ENCODE measurements at regions of chr11 and their contacts with region 1.

Region 1: DNA sequence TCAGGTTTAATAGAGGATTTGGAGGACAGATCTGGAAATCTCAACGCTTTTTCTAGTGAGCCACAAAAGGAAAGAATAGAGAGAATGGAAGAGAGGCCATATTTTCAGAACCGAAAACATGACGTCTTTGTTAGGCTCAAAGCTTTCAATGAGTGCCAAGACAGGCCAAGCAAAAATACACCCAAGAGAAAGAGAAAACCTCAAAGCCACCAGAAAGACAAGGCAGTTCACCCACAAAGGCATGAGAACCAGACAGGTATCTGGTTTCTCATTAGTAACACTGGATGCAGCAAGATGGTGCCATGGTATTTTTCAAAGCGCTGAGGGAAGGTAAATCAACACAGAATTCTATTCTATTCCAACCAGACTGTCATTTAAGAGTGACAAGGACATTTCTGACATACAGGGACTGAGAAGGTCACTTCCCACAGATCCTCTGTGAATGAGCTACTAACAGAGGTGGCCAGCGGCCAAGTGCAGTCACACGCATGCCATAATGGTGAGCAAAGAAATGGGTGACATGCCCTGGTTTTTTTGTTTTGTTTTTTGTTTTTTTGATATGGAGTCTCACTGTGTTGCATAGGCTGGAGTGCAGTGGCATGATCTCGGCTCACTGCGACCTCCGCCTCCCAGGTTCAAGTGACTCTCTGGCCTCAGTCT is 41.9 kb downstream of the TOLLIP start:
- DNase-seq: no peak
- ATAC-seq: no peak
- H3K4me3 ChIP-seq: no peak overlapping the region
- H3K27ac ChIP-seq: no peak overlapping the region
- H3K4me1 ChIP-seq: peaks cover 0 to 7% of the 10 kb centered on the region in 2 donors
- H3K27me3 ChIP-seq: no peaks in the 10 kb centered on the region
- CTCF ChIP-seq: no peak
- POLR2A ChIP-seq: no peak

Region 2: DNA sequence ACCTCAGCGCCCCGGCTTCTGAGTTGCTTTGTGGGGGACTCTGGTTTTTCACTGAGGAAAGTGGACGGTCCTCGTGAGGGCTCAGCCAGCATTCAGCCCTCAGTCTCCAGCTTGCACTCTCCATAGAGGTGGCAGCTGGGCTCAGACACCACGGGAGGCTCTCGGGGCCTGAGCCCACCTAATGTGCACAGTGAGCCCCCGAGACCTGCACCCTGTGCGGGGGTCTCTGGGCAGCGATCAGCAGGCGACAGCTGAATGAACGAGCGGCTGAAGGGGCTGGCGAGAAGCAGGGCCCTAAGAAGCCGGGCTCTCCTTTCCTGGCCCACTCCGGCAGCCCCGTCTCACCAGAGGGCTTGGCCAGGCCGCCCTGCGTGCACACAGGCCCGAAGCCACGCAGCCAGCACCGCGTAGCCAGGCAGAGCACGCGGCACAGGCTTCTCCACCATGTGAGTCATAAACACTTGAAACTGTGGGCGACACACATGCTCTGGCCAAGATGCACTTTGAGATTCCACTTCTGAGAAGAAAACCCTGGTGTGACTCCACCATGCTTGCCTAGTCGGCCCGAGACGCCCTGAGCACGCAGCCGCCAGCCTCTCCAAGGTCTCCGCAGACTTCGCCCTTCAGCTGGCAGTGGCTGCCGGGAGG is 13.9 kb after region 1 on chr11:
- in situ Hi-C with region 1: no loop called
- intact Hi-C with region 1: no loop called
- DNase-seq: no peak
- ATAC-seq: no peak
- H3K4me3 ChIP-seq: no peak overlapping the region
- H3K27ac ChIP-seq: no peak overlapping the region
- H3K4me1 ChIP-seq: no peaks in the 10 kb centered on the region
- H3K27me3 ChIP-seq: no peaks in the 10 kb centered on the region
- CTCF ChIP-seq: no peak
- POLR2A ChIP-seq: no peak

Region 3: GRCh38 chr11:2178906-2179494 is 911.4 kb after region 1 on chr11:
- in situ Hi-C with region 1: no loop called
- intact Hi-C with region 1: loop called (anchors 5 kb)
- DNase-seq: no peak
- ATAC-seq: no peak
- H3K4me3 ChIP-seq: no peak overlapping the region
- H3K27ac ChIP-seq: no peak overlapping the region
- H3K4me1 ChIP-seq: no peaks in the 10 kb centered on the region
- H3K27me3 ChIP-seq: peaks cover 2 to 16% (median 4%) of the 10 kb centered on the region in 3 donors
- CTCF ChIP-seq: no peak
- POLR2A ChIP-seq: no peak

Measured in gastrocnemius medialis (tissue), 4 donors.